ENCODE measurements at regions of chr2 and their contacts with region 1.

Region 1: GRCh38 chr2:30003128-30003527 is 81.7 kb upstream of the ALK start:
- DNase-seq: no peak
- ATAC-seq: no peak
- H3K4me3 ChIP-seq: no peak overlapping the region
- H3K27ac ChIP-seq: no peak overlapping the region
- H3K4me1 ChIP-seq: no peaks in the 10 kb centered on the region
- CTCF ChIP-seq: no peak
- EP300 ChIP-seq: no peak
- POLR2A ChIP-seq: no peak
- RAD21 ChIP-seq: no peak

Region 2: DNA sequence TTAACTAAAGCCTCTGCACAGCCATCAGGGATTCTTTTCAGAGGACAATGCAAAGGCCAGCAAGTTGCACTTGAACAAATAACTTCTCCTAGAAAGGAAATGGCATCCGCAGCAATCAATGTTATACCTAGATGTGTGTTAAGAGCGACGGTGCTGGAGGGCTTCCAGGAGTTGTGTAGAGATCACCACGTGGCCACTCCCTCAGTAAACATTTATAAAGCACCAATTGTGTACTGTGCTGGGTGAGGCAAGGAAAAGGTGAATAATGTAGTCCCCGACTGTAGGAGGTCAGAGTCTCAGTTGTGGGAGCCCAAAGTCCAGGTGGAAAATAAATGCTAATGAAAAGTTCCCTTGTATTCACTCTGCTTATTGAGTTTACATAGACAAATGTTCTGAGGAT is 216.8 kb before region 1 on chr2:
- CTCF ChIA-PET with region 1: no interaction called
- POLR2A ChIA-PET with region 1: no interaction called
- DNase-seq: peak in 1 of 2 experiments; percentile 17
- ATAC-seq: no peak
- H3K4me3 ChIP-seq: no peak overlapping the region
- H3K27ac ChIP-seq: no peak overlapping the region
- H3K4me1 ChIP-seq: peaks cover 3% of the 10 kb centered on the region; the same call in 1 of the 3 replicates
- CTCF ChIP-seq: no peak
- EP300 ChIP-seq: no peak
- POLR2A ChIP-seq: no peak
- RAD21 ChIP-seq: no peak

Region 3: GRCh38 chr2:30026087-30027055 is 23.2 kb after region 1 on chr2:
- CTCF ChIA-PET with region 1: interaction called, 27 read pairs
- POLR2A ChIA-PET with region 1: no interaction called
- DNase-seq: peak; percentile 50 to 76
- ATAC-seq: peak; percentile 88 to 96
- H3K4me3 ChIP-seq: no peak overlapping the region
- H3K27ac ChIP-seq: no peak overlapping the region
- H3K4me1 ChIP-seq: no peaks in the 10 kb centered on the region
- CTCF ChIP-seq: peak; percentile 72
- EP300 ChIP-seq: no peak
- POLR2A ChIP-seq: no peak
- RAD21 ChIP-seq: peak; percentile 80 to 86

Measured in A549 (cell line).